ENCODE measurements at regions of chr15 and their contacts with region 1.

Region 1: DNA sequence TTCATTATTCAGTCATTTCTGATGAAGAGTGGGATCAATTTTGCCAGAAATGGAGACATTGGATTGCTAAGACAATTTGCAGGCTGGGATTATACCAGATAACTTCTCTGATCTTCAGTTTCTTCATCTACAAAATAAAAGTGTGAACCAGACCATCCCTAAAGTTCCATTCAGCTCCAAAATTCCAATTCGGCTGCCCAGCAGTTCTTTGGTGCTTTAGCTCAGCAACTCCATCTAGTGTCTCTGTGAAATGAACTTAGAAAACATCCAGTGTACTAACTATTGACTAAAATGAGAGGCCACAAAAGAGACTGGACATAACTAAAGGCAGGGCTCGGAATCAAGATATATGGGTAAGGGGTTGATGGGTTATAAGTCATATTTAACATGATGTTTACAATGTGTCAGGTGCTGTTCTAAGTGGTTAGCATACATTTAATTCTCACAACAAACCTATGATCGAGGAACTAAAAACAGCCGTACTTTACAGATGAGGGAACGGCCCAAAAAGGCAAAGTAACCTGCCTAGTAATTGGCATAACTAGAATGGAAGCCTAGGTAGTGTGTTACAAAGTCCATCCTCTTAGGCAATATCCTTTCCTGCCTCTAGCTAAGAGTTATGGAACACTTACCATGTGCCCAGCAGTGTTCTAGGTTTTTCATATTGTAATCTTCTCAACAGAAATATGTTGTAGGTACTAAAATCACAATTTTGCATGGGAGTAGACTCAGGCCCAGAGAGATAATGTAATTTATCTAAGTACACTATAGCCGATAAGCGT is 17.0 kb downstream of the THAP10 start:
- DNase-seq: no peak
- H3K4me3 ChIP-seq: no peak overlapping the region
- H3K27ac ChIP-seq: peak overlapping the region; percentile 45 to 95 (median 87)
- H3K27me3 ChIP-seq: no peaks in the 10 kb centered on the region
- CTCF ChIP-seq: peak; percentile 34 to 94 (median 78)

Region 2: GRCh38 chr15:70825841-70826240 is 49.4 kb before region 1 on chr15:
- intact Hi-C with region 1: loop called (anchors 1 kb)
- DNase-seq: no peak
- H3K4me3 ChIP-seq: peak overlapping the region in 1 of 59 donors; percentile 21
- H3K27ac ChIP-seq: peak overlapping the region in 57 of 59 donors; percentile 3 to 90 (median 72)
- H3K27me3 ChIP-seq: no peaks in the 10 kb centered on the region
- CTCF ChIP-seq: no peak

Region 3: DNA sequence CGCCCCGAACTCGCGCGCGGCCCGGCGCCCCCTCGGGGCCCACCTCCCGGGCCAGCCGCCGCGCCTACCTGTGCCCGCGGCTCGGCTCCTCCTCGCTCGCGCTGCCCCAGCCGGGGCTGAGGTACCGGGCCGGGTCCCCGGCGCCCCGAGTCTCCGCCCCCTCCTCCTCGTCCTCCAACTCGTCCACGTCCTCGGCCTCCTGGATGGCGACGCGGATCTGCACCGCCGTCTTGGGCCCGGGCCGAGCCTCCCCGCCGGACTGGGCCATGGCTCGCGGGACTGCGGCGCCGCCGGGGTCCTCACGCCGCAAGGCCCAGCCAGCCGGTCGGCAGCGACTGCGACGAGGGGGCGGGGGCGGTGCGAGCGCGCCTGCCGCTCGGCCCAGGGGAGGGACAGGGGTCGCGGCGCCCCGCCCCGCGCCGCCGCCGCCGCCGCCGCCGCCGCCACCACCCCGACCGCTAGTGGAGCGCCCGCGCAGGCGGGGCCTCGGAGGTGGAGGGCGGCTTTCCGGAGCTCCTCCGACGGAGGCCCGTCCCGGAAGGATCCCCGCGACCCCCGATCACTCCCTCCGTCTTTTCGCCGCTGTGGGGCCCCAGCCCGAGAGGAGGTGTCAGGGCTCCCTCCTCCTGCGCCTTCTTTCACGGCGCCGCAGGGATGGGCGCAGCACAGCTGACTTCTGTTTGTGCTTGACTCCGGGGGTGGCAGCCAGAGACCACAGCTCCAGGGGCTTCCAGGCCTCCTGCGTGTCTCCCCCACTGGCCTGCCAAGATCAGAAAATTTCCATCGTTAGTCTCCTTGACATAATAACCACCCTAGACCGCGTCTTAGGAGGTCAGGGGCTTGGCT is 21.1 kb before region 1 on chr15 and contains the start of gene LARP6:
- intact Hi-C with region 1: loop called in 1 of 2 experiments (anchors 2 kb)
- DNase-seq: peak in 8 of 10 donors; percentile 45 to 83 (median 59)
- H3K4me3 ChIP-seq: peak within 1 kb of the TSS; percentile 75 to 96 (median 83)
- H3K27ac ChIP-seq: peak within 1 kb of the TSS; percentile 72 to 100 (median 99)
- H3K27me3 ChIP-seq: no peaks in the 10 kb centered on the region
- CTCF ChIP-seq: peak in 1 of 56 donors; percentile 3
- total RNA-seq, gene LARP6: 31.8 to 211 (median 79.7) TPM